Mammary epithelial cell (primary cell): ENCODE measurements at regions of chr20 and their contacts with region 1.

Region 1: DNA sequence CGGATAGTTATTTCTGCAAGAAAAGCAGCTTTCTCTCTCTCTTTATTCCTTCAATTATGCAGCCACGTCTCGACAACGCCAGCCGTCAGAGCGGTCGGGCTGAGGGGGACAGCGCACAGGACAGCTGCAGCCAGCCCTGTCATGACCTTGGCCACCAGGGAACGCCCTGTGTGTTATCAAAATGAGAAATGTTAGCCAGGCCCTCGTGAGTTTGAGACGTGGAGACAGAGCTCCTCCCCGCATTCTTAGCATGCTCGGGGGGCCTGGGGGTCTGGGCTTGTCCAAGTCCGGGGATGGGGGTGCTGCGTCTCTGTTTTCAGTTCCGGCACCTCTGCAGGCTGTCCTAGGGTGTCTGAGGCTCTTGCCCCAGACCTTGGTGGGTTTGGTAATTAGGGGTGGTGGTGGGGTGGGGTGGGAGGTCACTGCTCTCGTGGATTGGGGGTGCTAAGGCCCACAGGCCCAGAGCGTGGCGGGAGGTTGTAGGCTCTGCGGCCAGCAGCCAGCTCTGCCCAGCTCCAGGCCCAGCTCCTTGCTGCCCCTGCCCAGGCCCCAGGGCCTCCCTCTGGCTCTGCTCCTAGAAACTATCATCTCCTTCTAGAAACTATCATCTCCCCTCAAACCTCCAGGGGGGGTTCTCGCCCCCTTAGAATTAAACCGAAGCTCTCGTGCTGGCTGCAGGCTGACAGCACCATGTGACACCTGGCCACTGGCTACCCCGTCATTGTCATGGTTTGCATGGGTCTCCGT is 54.3 kb upstream of the GATA5 start:
- DNase-seq: no peak
- H3K4me3 ChIP-seq: no peak overlapping the region
- H3K27ac ChIP-seq: no peak overlapping the region
- H3K4me1 ChIP-seq: no peaks in the 10 kb centered on the region
- H3K27me3 ChIP-seq: peaks cover 12% of the 10 kb centered on the region
- CTCF ChIP-seq: no peak

Region 2: DNA sequence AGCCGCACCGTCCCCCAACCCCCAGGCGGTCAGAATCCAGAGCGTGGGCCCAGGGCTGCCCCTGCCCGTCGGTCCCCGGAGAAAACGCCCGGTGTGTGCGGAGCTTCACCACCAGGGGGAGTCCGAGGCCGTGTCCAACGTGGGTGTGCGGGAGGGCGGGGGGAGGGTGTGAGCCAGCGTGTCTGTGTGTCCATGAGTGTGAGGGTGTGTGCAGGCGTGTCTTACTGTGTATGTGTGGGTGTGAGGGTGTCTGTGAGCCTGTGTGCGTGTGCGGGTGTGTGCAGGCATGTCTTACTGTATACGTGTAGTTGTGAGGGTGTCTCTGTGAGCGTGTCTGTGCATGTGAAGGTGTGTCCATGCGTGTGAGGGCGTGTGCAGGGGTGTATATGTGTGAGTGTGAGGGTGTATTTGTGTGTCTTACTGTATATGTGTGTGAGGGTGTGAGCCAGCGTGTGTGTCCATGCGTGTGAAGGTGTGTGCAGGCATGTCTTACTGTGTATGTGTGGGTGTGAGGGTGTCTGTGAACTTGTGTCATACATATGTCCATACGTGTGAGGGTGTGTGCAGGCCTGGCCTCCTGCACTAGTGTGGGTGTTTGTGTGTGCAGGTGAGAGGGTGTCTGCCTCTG is 29.7 kb before region 1 on chr20:
- CTCF ChIA-PET with region 1: no interaction called
- dilution Hi-C with region 1: no loop called
- in situ Hi-C with region 1: no loop called
- intact Hi-C with region 1: no loop called
- DNase-seq: peak; percentile 29
- H3K4me3 ChIP-seq: no peak overlapping the region
- H3K27ac ChIP-seq: no peak overlapping the region
- H3K4me1 ChIP-seq: peaks cover 9% of the 10 kb centered on the region
- H3K27me3 ChIP-seq: no peaks in the 10 kb centered on the region
- CTCF ChIP-seq: peak; percentile 56 to 86

Region 3: GRCh38 chr20:62576815-62577506 is 46.9 kb after region 1 on chr20:
- CTCF ChIA-PET with region 1: no interaction called
- dilution Hi-C with region 1: loop called (anchors 5 kb)
- in situ Hi-C with region 1: no loop called
- intact Hi-C with region 1: no loop called
- DNase-seq: peak; percentile 16
- H3K4me3 ChIP-seq: no peak overlapping the region
- H3K27ac ChIP-seq: no peak overlapping the region
- H3K4me1 ChIP-seq: no peaks in the 10 kb centered on the region
- H3K27me3 ChIP-seq: peaks cover 12% of the 10 kb centered on the region
- CTCF ChIP-seq: no peak